HEK293 (cell line): ENCODE measurements at regions of chr3 and their contacts with region 1.

Region 1: DNA sequence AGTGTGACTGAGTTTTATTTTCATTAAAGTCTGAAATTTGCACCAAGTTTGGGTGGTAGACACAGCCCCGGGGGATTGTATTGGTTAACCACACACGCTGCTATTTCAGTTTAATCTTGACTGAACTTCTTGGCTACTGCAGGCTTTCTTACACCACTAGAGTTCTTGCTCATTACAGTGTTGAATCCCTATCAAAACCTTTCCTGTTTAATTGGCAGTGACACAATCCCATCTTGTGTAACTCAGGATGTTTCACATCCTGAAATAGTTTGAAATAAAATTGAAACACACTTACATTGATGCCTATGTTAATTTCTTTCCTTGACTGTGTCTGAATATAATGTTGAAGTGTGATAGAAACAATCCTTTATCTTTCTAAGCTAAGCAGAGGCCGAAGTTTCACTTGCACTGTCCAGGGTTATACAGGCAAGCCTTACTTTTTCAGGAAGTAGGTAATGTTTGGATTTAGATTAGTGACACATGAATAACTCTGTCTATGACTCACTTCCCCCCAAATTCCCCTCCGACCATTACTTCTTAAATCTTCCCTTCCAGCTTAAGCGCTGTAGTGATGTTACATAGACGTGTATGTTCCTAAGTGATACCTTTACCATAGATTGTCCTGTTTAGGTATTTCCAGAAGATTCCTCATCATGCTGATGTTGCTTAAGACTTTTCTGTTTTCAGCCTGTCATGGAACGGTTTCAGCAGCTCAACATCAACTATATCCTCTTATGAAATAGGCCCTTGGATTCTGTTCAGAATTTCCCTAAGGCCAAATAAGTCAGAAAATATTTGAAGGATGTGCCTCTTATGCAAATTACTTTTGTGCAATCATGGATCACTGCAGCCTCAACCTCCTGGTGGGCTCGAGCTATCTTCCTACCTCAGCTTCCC is 16.8 kb downstream of the ATG7 start:
- H3K4me3 ChIP-seq: no peak overlapping the region
- H3K27ac ChIP-seq: peak overlapping the region; percentile 58
- H3K4me1 ChIP-seq: peaks cover 16% of the 10 kb centered on the region; the same call in 1 of the 2 replicates
- CTCF ChIP-seq: no peak

Region 2: GRCh38 chr3:11271986-11272904 is 16.8 kb before region 1 on chr3 and contains the start of gene ATG7:
- CTCF ChIA-PET with region 1: interaction called, 4 read pairs
- POLR2A ChIA-PET with region 1: interaction called, 35 read pairs
- H3K4me3 ChIP-seq: peak within 1 kb of the TSS; percentile 87
- H3K27ac ChIP-seq: peak within 1 kb of the TSS; percentile 35
- H3K4me1 ChIP-seq: peaks cover 3% of the 10 kb centered on the region; the same call in 1 of the 2 replicates
- CTCF ChIP-seq: peak; percentile 42; the same call in 1 of the 2 replicates

Region 3: GRCh38 chr3:11300970-11301369 is 11.9 kb after region 1 on chr3:
- CTCF ChIA-PET with region 1: no interaction called
- POLR2A ChIA-PET with region 1: no interaction called
- H3K4me3 ChIP-seq: no peak overlapping the region
- H3K27ac ChIP-seq: no peak overlapping the region
- H3K4me1 ChIP-seq: no peaks in the 10 kb centered on the region
- CTCF ChIP-seq: no peak